Activated naive CD8-positive, alpha-beta T cell treated with anti-CD3 and anti-CD28 coated beads, Interleukin-2, amount 10 ng/mL, durations not matched to agents 7 days and 5 days (primary cell): ENCODE measurements at regions of chr9 and their contacts with region 1.

Region 1: GRCh38 chr9:136728080-136728547 is 14.6 kb downstream of the LCN10 start:
- DNase-seq: peak; percentile 98
- ATAC-seq: peak; percentile 75
- H3K4me3 Mint-ChIP-seq: peak overlapping the region; percentile 98
- H3K27ac Mint-ChIP-seq: no peak overlapping the region
- H3K4me1 Mint-ChIP-seq: peaks cover 23% of the 10 kb centered on the region
- H3K27me3 Mint-ChIP-seq: peaks cover 2% of the 10 kb centered on the region

Region 2: GRCh38 chr9:136625101-136626060 is 102.7 kb before region 1 on chr9:
- POLR2A ChIA-PET with region 1: no interaction called
- DNase-seq: no peak
- ATAC-seq: no peak
- H3K4me3 Mint-ChIP-seq: no peak overlapping the region
- H3K27ac Mint-ChIP-seq: peak overlapping the region; percentile 24
- H3K4me1 Mint-ChIP-seq: peaks cover 2% of the 10 kb centered on the region
- H3K27me3 Mint-ChIP-seq: no peaks in the 10 kb centered on the region

Region 3: DNA sequence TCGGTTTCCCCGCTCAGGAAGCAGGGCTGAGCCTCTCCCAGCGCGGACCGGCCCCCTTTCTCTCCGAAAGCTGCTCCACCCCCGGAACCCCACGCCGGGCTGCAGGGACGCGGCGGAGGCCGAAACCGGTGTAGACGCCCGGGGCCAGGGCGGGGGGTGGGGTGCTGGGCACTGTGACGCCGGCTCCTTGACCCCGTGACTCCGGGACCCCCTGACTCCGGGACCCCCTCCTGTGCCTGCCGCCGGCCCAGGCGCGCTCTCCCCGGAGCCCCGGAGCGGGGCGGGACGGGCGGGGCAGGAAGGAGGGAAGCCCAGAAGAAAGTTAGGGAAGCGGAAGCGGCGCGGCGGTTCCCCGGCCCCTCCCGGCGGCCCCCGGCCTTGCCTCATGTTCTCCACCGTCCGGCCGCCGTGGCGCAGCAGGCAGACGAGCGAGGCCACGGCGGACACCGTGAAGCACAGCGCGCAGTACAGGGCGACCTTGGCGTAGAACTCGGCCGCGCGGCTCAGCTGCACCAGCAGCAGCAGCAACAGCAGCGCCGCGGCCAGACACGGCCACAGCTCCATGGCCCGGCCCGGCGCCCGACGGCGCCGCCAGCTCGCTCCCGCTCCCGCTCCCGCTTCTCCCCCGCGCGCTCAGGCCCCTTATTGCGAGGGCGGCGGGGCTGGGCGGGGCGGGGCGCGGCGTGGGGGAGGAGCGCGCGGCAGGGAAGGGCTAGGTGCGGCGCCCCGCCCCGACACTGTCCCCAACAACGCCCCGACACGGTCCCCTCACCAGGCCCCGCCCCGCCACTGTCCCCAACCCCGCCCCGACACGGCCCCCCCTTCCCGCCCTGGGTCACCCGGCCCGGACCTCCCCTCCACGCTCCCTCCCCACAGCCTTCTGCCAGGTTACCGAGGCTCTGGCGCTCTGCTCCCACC is 41.1 kb before region 1 on chr9 and contains the start of gene AGPAT2:
- POLR2A ChIA-PET with region 1: interaction called, 24 read pairs
- DNase-seq: peak; percentile 82
- ATAC-seq: peak; percentile 76
- H3K4me3 Mint-ChIP-seq: peak within 1 kb of the TSS; percentile 87
- H3K27ac Mint-ChIP-seq: peak within 1 kb of the TSS; percentile 80
- H3K4me1 Mint-ChIP-seq: peaks cover 5% of the 10 kb centered on the region
- H3K27me3 Mint-ChIP-seq: no peaks in the 10 kb centered on the region
- total RNA-seq, gene AGPAT2: 21.6 to 24.8 TPM

Region 4: GRCh38 chr9:136700959-136701667 is 27.0 kb before region 1 on chr9:
- POLR2A ChIA-PET with region 1: interaction called, 52 read pairs
- DNase-seq: peak; percentile 69
- ATAC-seq: peak; percentile 86
- H3K4me3 Mint-ChIP-seq: peak overlapping the region; percentile 88
- H3K27ac Mint-ChIP-seq: peak overlapping the region; percentile 92
- H3K4me1 Mint-ChIP-seq: peaks cover 23% of the 10 kb centered on the region
- H3K27me3 Mint-ChIP-seq: peaks cover 23% of the 10 kb centered on the region

Region 5: DNA sequence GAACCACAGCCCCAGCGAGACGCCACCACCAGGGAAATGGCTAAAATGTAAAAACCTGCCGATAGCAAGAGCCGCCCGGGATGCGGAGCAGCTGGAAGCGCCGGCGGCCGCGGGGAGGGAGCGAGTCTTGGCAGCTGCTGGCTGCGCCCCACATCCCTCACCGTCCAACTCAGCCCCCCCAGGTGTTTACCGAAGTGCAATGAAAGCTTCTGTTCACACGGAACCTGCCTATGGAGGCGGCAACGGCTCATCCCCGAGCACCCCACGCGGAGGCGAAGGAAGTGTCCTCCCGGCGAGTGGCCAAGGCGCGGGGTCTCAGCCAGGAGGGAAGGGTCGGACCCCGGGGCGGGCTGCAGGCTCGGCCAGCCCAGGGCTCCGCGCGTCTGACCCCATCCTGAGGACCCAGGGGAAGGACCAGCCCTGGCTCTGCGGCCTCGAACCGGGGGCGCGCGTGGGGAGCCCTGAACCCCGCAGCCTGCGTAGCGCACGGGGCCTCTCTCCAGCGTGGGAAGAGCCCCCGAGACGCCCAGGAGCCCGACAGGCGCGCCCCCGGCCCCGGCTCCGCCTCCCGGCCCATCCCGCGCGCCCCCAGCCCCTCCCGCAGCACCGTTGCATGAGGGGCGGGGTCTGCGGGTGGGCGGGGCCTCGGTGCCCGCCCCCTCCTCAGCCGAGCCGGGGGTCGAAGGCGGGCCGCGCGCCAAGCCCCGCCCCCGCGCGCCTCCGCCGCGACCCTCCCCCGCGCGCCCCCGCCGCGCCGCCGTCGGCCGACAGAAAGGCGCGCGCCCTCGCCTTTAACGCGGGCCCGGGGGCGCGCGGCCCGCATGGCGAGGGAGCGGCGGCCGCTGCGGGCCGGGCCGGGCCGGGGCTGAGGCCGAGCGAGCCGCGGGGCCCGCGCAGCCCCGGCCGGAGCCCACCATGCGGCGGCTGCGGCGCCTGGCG is 16.1 kb before region 1 on chr9 and contains the start of gene DIPK1B:
- POLR2A ChIA-PET with region 1: interaction called, 46 read pairs
- DNase-seq: peak; percentile 38
- ATAC-seq: peak; percentile 24
- H3K4me3 Mint-ChIP-seq: peak within 1 kb of the TSS; percentile 50
- H3K27ac Mint-ChIP-seq: no peak within 1 kb of the TSS
- H3K4me1 Mint-ChIP-seq: no peaks in the 10 kb centered on the region
- H3K27me3 Mint-ChIP-seq: peaks cover 31% of the 10 kb centered on the region
- total RNA-seq, gene DIPK1B: 0.11 TPM in 1 of 2 experiments, not detected in the other

Region 6: GRCh38 chr9:136742591-136743391 is 14.7 kb after region 1 on chr9 and contains the start of gene LCN10:
- POLR2A ChIA-PET with region 1: interaction called, 20 read pairs
- DNase-seq: no peak
- ATAC-seq: no peak
- H3K4me3 Mint-ChIP-seq: peak within 1 kb of the TSS; percentile 58
- H3K27ac Mint-ChIP-seq: no peak within 1 kb of the TSS
- H3K4me1 Mint-ChIP-seq: peaks cover 4% of the 10 kb centered on the region
- H3K27me3 Mint-ChIP-seq: no peaks in the 10 kb centered on the region
- total RNA-seq, gene LCN10: 1.00 to 1.0 TPM